ENCODE measurements at regions of chr1 and their contacts with region 1.

Region 1: DNA sequence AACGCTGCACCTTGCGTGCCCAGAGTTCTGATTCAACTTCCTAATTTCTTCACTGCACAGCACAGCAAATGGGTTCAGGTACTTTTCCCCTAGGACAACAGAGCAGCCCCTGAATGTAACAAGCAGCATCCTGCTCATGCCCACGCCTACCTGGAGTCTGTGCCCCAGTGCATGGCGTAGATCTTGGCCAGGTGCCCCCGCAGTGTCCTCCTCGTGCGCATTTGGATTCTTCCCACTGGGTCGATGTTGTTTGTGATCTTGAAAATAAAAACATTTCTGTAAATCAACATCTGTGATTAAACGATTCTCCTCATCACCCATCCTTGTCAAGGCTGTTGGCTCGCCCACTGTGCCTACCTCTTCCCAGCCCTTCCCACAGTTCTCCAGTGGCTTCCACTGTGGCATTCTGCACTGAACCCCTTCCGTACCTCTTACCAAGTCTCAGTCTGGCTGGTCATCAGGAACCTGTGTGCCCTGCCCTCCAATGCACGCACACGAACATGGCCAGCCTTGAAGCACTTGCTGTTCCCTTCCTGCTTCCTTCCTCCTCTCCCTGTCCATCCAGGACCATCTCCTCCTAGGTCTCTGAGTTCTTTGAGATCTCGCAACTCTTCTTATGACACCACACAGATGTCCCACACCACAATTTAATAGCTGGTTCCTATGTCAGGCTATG is 37.5 kb upstream of the NADK start:
- DNase-seq: no peak
- ATAC-seq: no peak
- H3K4me3 ChIP-seq: no peak overlapping the region
- H3K4me3 Mint-ChIP-seq: no peak overlapping the region
- H3K27ac ChIP-seq: no peak overlapping the region
- H3K27ac Mint-ChIP-seq: no peak overlapping the region
- H3K4me1 ChIP-seq: no peaks in the 10 kb centered on the region
- H3K4me1 Mint-ChIP-seq: peaks cover 5% of the 10 kb centered on the region
- H3K27me3 ChIP-seq: no peaks in the 10 kb centered on the region
- H3K27me3 Mint-ChIP-seq: no peaks in the 10 kb centered on the region
- CTCF ChIP-seq: no peak

Region 2: GRCh38 chr1:1796466-1796865 is 19.3 kb before region 1 on chr1:
- CTCF ChIA-PET with region 1: no interaction called
- POLR2A ChIA-PET with region 1: no interaction called
- intact Hi-C with region 1: no loop called
- DNase-seq: peak in 6 of 9 experiments; percentile 17 to 59 (median 37)
- ATAC-seq: peak; percentile 65
- H3K4me3 ChIP-seq: no peak overlapping the region
- H3K4me3 Mint-ChIP-seq: no peak overlapping the region
- H3K27ac ChIP-seq: no peak overlapping the region
- H3K27ac Mint-ChIP-seq: no peak overlapping the region
- H3K4me1 ChIP-seq: no peaks in the 10 kb centered on the region
- H3K4me1 Mint-ChIP-seq: peaks cover 8% of the 10 kb centered on the region
- H3K27me3 ChIP-seq: no peaks in the 10 kb centered on the region
- H3K27me3 Mint-ChIP-seq: no peaks in the 10 kb centered on the region
- CTCF ChIP-seq: peak; percentile 17

Region 3: GRCh38 chr1:1873186-1873585 is 57.4 kb after region 1 on chr1:
- CTCF ChIA-PET with region 1: no interaction called
- POLR2A ChIA-PET with region 1: no interaction called
- intact Hi-C with region 1: loop called in 1 of 2 experiments (anchors 10 kb)
- DNase-seq: no peak
- ATAC-seq: no peak
- H3K4me3 ChIP-seq: no peak overlapping the region
- H3K4me3 Mint-ChIP-seq: no peak overlapping the region
- H3K27ac ChIP-seq: no peak overlapping the region
- H3K27ac Mint-ChIP-seq: no peak overlapping the region
- H3K4me1 ChIP-seq: peaks cover 58% of the 10 kb centered on the region
- H3K4me1 Mint-ChIP-seq: peaks cover 75% of the 10 kb centered on the region
- H3K27me3 ChIP-seq: no peaks in the 10 kb centered on the region
- H3K27me3 Mint-ChIP-seq: no peaks in the 10 kb centered on the region
- CTCF ChIP-seq: no peak

Region 4: DNA sequence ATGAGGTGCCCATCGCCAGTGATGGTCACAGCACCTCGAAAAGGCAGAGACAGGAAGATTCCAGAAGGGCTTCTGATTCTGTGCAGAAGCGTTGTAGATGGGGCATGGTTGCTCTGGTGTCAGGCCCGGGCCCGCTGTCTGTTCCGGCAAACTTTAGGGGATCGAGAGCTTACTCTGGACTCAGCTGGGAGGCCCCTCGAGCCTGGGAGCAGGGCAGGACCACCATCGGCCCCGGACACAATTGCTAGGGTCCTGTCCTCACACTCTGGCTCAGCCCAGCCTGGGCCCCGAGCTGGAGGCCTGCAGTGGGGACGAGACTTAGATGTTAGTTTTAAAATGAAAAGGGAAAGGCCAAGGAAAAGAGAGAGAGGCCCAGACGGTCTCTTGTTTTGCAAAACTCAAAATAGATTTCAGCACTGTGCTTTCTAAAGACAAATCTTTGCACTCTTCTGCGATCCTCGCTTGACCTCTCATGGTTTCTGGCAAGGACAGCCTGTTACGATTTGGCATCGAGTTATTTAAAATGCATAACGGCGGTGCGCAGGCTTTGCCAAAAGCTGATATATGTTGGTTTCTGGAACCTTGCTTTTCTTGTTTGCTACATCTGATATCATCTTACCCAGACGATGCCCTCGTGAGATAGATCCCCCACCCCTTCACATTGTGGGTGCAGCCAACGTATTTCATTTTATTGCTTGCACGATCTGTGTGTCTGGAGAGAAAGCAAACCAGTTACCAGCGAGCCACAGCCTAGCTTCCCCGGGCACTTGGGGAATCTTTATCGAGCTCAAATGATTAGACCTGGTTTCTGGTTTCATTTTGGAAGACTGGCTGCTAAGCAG is 1311.2 kb after region 1 on chr1:
- CTCF ChIA-PET with region 1: no interaction called
- POLR2A ChIA-PET with region 1: no interaction called
- intact Hi-C with region 1: no loop called
- DNase-seq: no peak
- ATAC-seq: no peak
- H3K4me3 ChIP-seq: no peak overlapping the region
- H3K4me3 Mint-ChIP-seq: no peak overlapping the region
- H3K27ac ChIP-seq: no peak overlapping the region
- H3K27ac Mint-ChIP-seq: no peak overlapping the region
- H3K4me1 ChIP-seq: no peaks in the 10 kb centered on the region
- H3K4me1 Mint-ChIP-seq: no peaks in the 10 kb centered on the region
- H3K27me3 ChIP-seq: no peaks in the 10 kb centered on the region
- H3K27me3 Mint-ChIP-seq: no peaks in the 10 kb centered on the region
- CTCF ChIP-seq: no peak

Measured in CD8-positive, alpha-beta T cell (primary cell).